Naive thymus-derived CD4-positive, alpha-beta T cell (primary cell): ENCODE measurements at regions of chr7 and their contacts with region 1.

Region 1: DNA sequence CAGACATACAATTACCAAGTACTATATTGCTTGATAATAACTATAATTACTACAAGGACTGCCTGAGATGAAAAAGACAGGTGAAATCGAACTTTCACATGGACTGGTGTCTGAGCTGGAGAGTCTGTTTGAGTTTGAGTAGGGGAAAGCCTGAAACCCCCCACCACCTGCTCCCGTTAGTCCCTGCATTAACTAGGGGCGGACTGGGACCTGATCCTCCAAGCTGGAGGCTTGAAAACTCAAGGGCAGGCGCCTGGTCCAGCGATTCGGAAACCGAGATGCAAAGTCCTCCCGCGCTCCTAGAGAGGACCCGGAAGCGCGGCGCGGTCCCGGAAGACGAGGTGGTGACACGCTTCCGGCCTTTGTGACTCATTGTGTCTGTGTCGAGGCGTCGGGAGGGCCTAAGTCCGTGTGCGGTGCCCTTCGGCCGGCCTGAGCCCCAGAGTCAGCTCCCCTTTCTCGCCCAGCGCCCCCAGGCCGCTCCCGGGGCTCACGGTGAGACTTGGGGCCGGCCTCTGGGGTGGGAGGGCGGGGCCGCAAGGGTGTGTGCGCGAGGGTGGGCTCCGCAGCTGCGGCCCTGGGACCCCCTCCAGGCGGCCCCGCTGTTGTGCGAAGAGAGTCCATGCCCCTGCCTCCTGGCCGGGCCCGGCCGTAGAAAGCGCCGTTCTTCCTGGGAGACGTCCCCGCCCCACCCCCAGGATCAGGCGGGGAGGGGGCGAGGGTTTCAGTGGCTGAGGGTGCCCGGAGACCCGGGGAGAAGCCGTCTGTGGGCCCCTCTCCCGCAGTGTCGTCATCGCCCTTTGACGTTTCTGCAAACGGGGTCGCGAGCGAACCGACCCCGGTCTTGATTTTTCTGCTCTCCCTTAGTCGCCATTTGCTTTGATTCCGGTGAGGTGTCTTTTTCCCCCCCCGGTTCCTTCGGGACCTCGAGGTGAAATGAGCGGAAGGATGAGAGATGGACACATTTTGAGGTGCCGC is at the start of gene ZKSCAN1:
- DNase-seq: peak; percentile 68 to 86 (median 81)
- ATAC-seq: peak; percentile 99
- H3K4me3 ChIP-seq: peak within 1 kb of the TSS; percentile 51
- H3K4me3 Mint-ChIP-seq: peak within 1 kb of the TSS; percentile 92 to 98 (median 96)
- H3K27ac ChIP-seq: peak within 1 kb of the TSS; percentile 98
- H3K27ac Mint-ChIP-seq: peak within 1 kb of the TSS; percentile 91 to 98 (median 97)
- H3K4me1 ChIP-seq: peaks cover 19 to 22% of the 10 kb centered on the region in 2 donors
- H3K4me1 Mint-ChIP-seq: peaks cover 23 to 57% (median 44%) of the 10 kb centered on the region in 7 donors
- H3K27me3 ChIP-seq: no peaks in the 10 kb centered on the region
- H3K27me3 Mint-ChIP-seq: peaks cover 0 to 3% (median 0%) of the 10 kb centered on the region in 5 donors
- total RNA-seq, gene ZKSCAN1: 54.0 to 103 (median 70.1) TPM

Region 2: GRCh38 chr7:100049441-100050311 is 34.2 kb after region 1 on chr7 and contains the start of gene ZSCAN21:
- CTCF ChIA-PET with region 1: interaction called, 4 read pairs
- POLR2A ChIA-PET with region 1: interaction called, 11 read pairs
- intact Hi-C with region 1: loop called (anchors 1 kb)
- DNase-seq: peak; percentile 70 to 89 (median 78)
- ATAC-seq: peak; percentile 94
- H3K4me3 ChIP-seq: peak within 1 kb of the TSS; percentile 92
- H3K4me3 Mint-ChIP-seq: peak within 1 kb of the TSS; percentile 86 to 95 (median 92)
- H3K27ac ChIP-seq: peak within 1 kb of the TSS; percentile 95
- H3K27ac Mint-ChIP-seq: peak within 1 kb of the TSS; percentile 81 to 98 (median 97)
- H3K4me1 ChIP-seq: peaks cover 0 to 6% of the 10 kb centered on the region in 2 donors
- H3K4me1 Mint-ChIP-seq: peaks cover 4 to 29% (median 25%) of the 10 kb centered on the region in 7 donors
- H3K27me3 ChIP-seq: no peaks in the 10 kb centered on the region
- H3K27me3 Mint-ChIP-seq: peaks cover 0 to 3% (median 0%) of the 10 kb centered on the region in 5 donors
- total RNA-seq, gene ZSCAN21: 3.9 to 10.1 (median 6.2) TPM

Region 3: GRCh38 chr7:100428967-100429636 is 413.6 kb after region 1 on chr7:
- CTCF ChIA-PET with region 1: no interaction called
- POLR2A ChIA-PET with region 1: no interaction called
- intact Hi-C with region 1: no loop called
- DNase-seq: peak; percentile 100
- ATAC-seq: peak; percentile 76
- H3K4me3 ChIP-seq: peak overlapping the region; percentile 88
- H3K4me3 Mint-ChIP-seq: peak overlapping the region; percentile 93 to 100 (median 97)
- H3K27ac ChIP-seq: peak overlapping the region; percentile 97
- H3K27ac Mint-ChIP-seq: peak overlapping the region; percentile 99 to 100 (median 100)
- H3K4me1 ChIP-seq: peaks cover 22 to 29% of the 10 kb centered on the region in 2 donors
- H3K4me1 Mint-ChIP-seq: peaks cover 22 to 56% (median 42%) of the 10 kb centered on the region in 7 donors
- H3K27me3 ChIP-seq: no peaks in the 10 kb centered on the region
- H3K27me3 Mint-ChIP-seq: peaks cover 0 to 24% (median 0%) of the 10 kb centered on the region in 5 donors